Heart left ventricle (tissue), 16 donors: ENCODE measurements at regions of chrX and their contacts with region 1.

Region 1: DNA sequence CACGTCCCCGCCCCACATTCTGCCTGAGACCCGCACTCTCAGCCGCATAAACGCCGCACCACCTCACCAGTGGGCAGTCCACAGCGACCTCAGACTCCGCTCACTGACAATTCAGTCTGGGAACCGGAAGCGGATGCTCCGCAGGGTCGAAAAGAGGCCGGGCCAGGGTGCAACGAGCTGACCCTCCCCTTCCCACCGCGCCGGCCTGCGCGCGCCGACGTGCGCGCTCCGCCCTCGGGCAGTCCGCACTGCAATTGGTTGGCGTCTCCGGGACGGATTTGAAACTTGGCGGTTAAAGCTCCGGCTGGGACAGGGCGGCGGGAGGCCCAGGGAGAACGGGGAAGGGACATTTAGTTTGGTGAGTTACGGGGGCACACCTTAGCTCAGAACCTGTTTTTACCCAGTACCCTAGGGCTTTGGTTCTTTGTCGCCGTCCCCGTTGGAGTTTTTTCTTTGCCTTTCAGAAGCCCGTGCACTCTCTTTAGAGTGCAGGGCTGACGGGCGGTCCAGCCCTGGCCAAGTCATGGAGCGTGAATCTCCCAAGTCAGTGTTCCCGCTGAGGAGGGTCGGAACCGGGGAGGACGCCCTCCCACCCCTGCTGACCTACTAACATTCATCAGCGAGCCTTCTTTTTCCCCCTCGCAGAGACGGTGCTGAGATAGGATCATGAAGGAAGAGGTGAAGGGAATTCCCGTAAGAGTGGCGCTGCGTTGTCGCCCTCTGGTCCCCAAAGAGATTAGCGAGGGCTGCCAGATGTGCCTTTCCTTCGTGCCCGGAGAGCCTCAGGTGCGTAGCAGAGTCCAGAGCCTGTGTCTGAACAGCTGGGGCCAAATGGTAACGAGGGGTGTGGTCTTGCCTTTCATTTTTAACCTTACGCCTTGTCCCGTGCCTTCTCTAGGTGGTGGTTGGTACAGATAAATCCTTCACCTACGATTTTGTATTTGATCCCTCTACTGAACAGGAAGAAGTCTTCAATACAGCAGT is at the starts of genes KIF4A and PDZD11:
- DNase-seq: peak; percentile 82 to 90 (median 84)
- ATAC-seq: peak; percentile 97 to 100 (median 100)
- H3K4me3 ChIP-seq: peak within 1 kb of the TSS; percentile 29 to 86 (median 59)
- H3K27ac ChIP-seq: peak within 1 kb of the TSS in 11 of 12 donors; percentile 48 to 83 (median 69)
- H3K4me1 ChIP-seq: peaks cover 0 to 18% (median 6%) of the 10 kb centered on the region in 12 donors
- H3K27me3 ChIP-seq: peaks cover 0 to 6% (median 0%) of the 10 kb centered on the region in 9 donors
- CTCF ChIP-seq: no peak
- POLR2A ChIP-seq: peak in 1 of 2 donors; percentile 34
- total RNA-seq, gene KIF4A: 0.06 to 4.1 (median 0.25) TPM in 8 of 9 donors, not detected in the other
- total RNA-seq, gene PDZD11: 27.1 to 51.4 (median 36.7) TPM

Region 2: DNA sequence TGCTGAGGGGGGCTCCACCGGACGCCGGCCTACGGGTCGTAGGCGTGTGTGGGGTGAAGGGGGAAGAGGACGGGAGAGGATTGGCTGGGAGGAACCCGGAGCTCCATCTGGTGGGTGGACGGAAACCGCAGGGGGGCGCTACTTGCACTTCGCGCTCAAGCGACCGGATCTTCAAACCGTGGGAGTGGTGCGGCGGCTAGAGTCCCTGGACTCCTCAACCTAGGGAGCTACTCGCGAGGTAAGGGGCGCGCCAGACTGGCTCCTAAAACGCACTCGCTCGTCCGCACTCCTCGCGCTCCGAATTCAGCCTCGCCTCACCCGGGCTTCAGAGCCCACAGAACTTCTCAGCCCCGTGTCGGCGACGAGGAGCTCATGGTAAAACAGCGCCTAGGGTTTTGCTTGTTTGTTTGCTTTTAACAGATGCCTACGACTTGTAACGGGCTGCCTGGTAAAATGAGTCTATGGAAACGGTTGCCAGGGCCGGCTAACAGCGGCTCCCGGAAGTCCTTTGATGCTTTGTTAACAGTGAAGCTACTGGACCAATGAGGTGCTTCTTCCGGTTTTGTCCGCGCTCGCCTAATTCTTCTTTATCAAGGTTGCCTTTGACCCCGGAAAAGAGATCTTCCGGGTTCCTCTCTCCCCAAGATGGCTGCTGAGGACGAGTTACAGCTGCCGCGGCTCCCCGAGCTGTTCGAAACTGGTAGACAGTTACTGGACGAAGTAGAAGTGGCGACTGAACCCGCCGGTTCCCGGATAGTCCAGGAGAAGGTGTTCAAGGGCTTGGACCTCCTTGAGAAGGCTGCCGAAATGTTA is 156.6 kb before region 1 on chrX and contains the start of gene IGBP1:
- intact Hi-C with region 1: loop called in 1 of 10 experiments (anchors 10 kb)
- DNase-seq: peak; percentile 77 to 86 (median 84)
- ATAC-seq: peak; percentile 92 to 97 (median 93)
- H3K4me3 ChIP-seq: peak within 1 kb of the TSS; percentile 49 to 90 (median 77)
- H3K27ac ChIP-seq: peak within 1 kb of the TSS; percentile 55 to 91 (median 80)
- H3K4me1 ChIP-seq: peaks cover 0 to 18% (median 5%) of the 10 kb centered on the region in 12 donors
- H3K27me3 ChIP-seq: no peaks in the 10 kb centered on the region
- CTCF ChIP-seq: peak; percentile 41 to 76 (median 57)
- POLR2A ChIP-seq: no peak
- total RNA-seq, gene IGBP1: 36.4 to 52.7 (median 45.5) TPM

Region 3: DNA sequence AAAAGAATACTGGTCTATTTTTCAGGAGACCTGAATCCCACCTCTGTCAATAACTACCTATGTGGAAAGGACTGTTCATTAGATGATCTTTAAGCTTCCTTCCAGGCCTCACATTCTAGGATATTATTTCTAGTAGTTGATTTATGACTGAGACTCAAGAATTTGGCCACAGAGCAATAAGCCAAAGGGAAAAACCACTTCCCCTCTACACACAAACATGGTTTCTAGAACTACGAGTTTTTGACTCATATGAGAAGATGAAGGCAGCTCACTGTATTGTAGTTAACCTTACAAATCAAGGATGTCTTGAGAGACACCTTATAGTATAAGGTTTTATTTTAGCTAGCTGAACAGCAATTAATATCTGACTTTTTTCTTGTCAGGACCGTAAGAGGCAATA is 96.2 kb after region 1 on chrX:
- intact Hi-C with region 1: no loop called
- DNase-seq: no peak
- ATAC-seq: no peak
- H3K4me3 ChIP-seq: no peak overlapping the region
- H3K27ac ChIP-seq: no peak overlapping the region
- H3K4me1 ChIP-seq: no peaks in the 10 kb centered on the region
- H3K27me3 ChIP-seq: peaks cover 0 to 3% (median 0%) of the 10 kb centered on the region in 9 donors
- CTCF ChIP-seq: no peak
- POLR2A ChIP-seq: no peak

Region 4: DNA sequence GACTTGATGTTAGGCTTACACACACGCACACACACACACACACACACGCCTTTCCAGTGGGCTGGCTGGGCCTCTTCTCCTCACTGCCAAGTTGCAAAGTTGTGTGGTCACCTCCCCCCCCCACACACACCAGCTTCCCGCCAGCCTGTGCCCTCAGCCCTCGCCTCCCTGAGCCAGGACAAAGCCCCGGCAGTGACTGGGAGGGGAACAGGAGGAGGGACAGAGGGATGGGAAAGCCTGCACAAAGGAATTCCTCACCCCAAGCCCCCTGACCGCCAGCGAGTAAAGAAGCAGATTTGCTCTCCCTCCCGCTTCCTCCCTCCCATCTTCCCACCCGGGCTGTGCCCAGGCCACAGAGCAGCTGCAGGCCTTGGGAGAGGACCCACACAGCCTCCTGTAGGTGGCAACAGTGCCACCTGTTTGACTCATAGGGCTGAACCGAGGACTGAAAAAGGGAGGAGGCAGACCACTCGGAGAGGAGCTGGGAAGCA is 132.8 kb after region 1 on chrX and contains the start of gene GDPD2:
- intact Hi-C with region 1: loop called in 1 of 10 experiments (anchors 10 kb)
- DNase-seq: no peak
- ATAC-seq: peak in 3 of 4 donors; percentile 65 to 78 (median 71)
- H3K4me3 ChIP-seq: no peak within 1 kb of the TSS
- H3K27ac ChIP-seq: no peak within 1 kb of the TSS
- H3K4me1 ChIP-seq: no peaks in the 10 kb centered on the region
- H3K27me3 ChIP-seq: peaks cover 0 to 22% (median 0%) of the 10 kb centered on the region in 9 donors
- CTCF ChIP-seq: peak in 3 of 12 donors; percentile 17 to 32 (median 27)
- POLR2A ChIP-seq: no peak
- total RNA-seq, gene GDPD2: not detected

Region 5: DNA sequence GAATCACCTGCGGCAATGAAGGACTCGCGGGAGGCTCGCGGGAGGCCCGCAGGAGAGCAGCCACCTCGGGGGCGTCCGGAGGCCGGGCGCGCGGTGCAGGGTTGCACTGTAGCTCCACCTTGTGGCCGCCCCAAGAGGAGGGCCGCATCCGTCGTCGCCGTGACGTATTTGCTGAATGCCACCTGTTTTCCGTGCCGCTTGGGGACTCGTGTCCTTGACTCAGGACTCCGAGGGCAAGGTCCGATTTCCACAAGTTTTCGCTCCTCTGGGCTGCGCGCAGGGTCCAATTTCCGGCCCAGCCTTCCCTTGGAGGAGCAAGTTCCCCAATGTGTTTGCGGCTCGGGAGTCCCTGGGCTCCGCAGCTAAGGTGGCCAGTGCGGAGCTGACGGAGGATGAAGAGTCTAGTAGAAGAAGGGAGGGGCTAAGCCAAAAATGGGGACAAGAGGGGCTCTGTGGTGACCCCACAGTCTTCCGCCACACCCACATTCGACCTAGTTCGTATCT is 143.8 kb after region 1 on chrX:
- intact Hi-C with region 1: loop called in 4 of 10 experiments (anchors 5 to 10 kb)
- DNase-seq: peak; percentile 66 to 84 (median 71)
- ATAC-seq: peak; percentile 53 to 80 (median 73)
- H3K4me3 ChIP-seq: peak overlapping the region; percentile 35 to 94 (median 68)
- H3K27ac ChIP-seq: peak overlapping the region; percentile 38 to 97 (median 83)
- H3K4me1 ChIP-seq: peaks cover 0 to 20% (median 3%) of the 10 kb centered on the region in 12 donors
- H3K27me3 ChIP-seq: peaks cover 0 to 18% (median 0%) of the 10 kb centered on the region in 9 donors
- CTCF ChIP-seq: peak; percentile 56 to 78 (median 63)
- POLR2A ChIP-seq: no peak